ENCODE measurements at regions of chr16 and their contacts with region 1.

Region 1: GRCh38 chr16:22023505-22023904 is 15.6 kb downstream of the MOSMO start:
- DNase-seq: no peak
- ATAC-seq: no peak
- H3K4me3 ChIP-seq: no peak overlapping the region
- H3K27ac ChIP-seq: peak overlapping the region; percentile 46
- H3K4me1 ChIP-seq: peaks cover 40% of the 10 kb centered on the region
- H3K27me3 ChIP-seq: no peaks in the 10 kb centered on the region
- CTCF ChIP-seq: no peak

Region 2: DNA sequence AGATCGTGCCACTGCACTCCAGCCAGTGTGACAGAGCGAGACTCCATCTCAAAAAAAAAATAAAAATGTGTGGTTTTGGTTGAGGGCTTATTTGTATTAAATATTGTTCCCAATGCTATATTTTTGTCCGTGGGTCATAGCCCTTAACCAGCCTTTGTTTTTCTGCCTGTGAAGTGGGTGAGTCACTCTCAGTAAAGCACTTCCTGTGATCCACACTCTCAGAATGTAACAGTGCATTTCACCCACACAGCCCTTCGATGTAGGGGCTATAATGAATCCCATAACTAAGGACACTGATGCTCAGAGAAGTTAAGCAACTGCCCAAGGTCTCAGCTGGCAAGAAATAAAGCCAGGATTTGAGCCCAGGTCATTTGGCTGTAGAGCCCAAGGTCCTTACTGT is 239.0 kb after region 1 on chr16:
- CTCF ChIA-PET with region 1: no interaction called
- POLR2A ChIA-PET with region 1: no interaction called
- in situ Hi-C with region 1: no loop called
- intact Hi-C with region 1: no loop called
- DNase-seq: no peak
- ATAC-seq: no peak
- H3K4me3 ChIP-seq: no peak overlapping the region
- H3K27ac ChIP-seq: no peak overlapping the region
- H3K4me1 ChIP-seq: no peaks in the 10 kb centered on the region
- H3K27me3 ChIP-seq: no peaks in the 10 kb centered on the region
- CTCF ChIP-seq: no peak

Region 3: GRCh38 chr16:22312897-22313781 is 289.6 kb after region 1 on chr16:
- CTCF ChIA-PET with region 1: no interaction called
- POLR2A ChIA-PET with region 1: no interaction called
- in situ Hi-C with region 1: no loop called
- intact Hi-C with region 1: no loop called
- DNase-seq: no peak
- ATAC-seq: no peak
- H3K4me3 ChIP-seq: no peak overlapping the region
- H3K27ac ChIP-seq: no peak overlapping the region
- H3K4me1 ChIP-seq: no peaks in the 10 kb centered on the region
- H3K27me3 ChIP-seq: no peaks in the 10 kb centered on the region
- CTCF ChIP-seq: no peak

Region 4: DNA sequence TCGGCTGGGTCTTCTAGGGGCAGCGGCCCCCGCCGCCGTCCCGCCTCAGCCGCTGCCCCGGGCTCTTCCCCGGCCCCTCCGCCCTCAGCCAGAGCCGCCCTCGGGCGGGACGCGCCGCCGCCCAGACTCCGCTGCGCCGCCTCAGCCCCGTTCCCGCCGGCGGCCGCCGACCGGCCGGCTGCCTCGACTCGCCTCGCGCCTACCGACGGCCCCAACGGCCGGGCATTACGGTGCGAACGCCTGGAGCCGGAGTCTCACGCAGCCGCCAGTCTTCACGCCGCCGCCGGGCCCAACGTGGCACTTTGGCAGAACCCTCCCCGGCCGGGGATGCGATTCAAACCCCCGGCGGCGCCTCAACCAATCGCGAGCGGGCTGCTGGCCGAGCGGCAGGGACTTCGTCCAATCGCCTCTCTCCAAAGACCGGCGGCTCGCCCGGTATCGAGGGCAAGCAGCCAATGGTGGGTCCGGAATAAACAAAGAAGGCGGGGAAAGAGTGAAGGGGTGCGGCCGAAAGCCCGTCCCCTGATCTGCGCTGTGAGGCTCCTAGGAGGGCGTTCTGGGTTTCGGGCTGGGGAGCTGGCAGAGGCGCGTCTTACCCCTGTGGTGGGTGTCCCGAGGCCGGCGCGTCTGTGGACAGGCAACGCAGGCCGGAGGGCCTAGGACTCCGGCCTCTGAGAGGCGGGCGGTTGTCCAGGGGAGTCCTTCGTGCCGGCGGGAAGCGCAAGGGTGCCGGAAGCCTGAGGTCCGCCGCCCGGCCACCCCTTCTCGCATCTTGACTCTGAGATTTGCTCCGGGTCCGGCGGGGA is 351.0 kb after region 1 on chr16 and contains the start of gene CDR2:
- CTCF ChIA-PET with region 1: no interaction called
- POLR2A ChIA-PET with region 1: interaction called, 11 read pairs
- in situ Hi-C with region 1: no loop called
- intact Hi-C with region 1: no loop called
- DNase-seq: peak; percentile 73
- ATAC-seq: peak; percentile 97
- H3K4me3 ChIP-seq: peak within 1 kb of the TSS; percentile 62 to 84
- H3K27ac ChIP-seq: peak within 1 kb of the TSS; percentile 87
- H3K4me1 ChIP-seq: peaks cover 32% of the 10 kb centered on the region
- H3K27me3 ChIP-seq: no peaks in the 10 kb centered on the region
- CTCF ChIP-seq: no peak
- total RNA-seq, gene CDR2: 35.7 TPM